ENCODE measurements at regions of chr16 and their contacts with region 1.

Region 1: GRCh38 chr16:56356276-56357240 is 68.8 kb downstream of the AMFR start:
- DNase-seq: peak; percentile 83
- H3K4me3 Mint-ChIP-seq: peak overlapping the region; percentile 46
- H3K27ac Mint-ChIP-seq: no peak overlapping the region
- H3K4me1 Mint-ChIP-seq: peaks cover 8% of the 10 kb centered on the region
- H3K27me3 Mint-ChIP-seq: peaks cover 10% of the 10 kb centered on the region
- CTCF ChIP-seq: peak; percentile 76

Region 2: DNA sequence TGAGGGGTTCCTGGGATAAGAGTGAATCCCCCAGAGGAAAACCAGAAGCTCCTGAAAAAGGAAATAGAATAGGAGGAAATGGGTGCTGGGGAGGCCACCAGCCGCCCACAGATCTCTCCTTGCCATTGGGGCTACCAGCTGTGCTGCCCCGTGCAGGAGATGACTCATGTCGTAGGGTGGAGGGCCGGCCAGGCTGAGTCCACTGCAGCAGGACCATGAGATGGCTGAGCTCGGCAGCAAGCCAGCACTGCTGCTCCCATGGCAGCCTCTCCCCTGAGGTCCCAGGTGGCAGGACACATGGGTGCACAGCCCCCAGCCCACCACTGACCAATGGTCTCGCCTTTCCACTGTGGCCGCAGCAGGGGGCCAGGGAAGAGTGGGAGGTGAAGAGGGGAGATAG is 69.7 kb before region 1 on chr16:
- CTCF ChIA-PET with region 1: no interaction called
- POLR2A ChIA-PET with region 1: no interaction called
- intact Hi-C with region 1: no loop called
- DNase-seq: peak; percentile 21
- H3K4me3 Mint-ChIP-seq: no peak overlapping the region
- H3K27ac Mint-ChIP-seq: no peak overlapping the region
- H3K4me1 Mint-ChIP-seq: no peaks in the 10 kb centered on the region
- H3K27me3 Mint-ChIP-seq: peaks cover 11% of the 10 kb centered on the region
- CTCF ChIP-seq: no peak

Region 3: DNA sequence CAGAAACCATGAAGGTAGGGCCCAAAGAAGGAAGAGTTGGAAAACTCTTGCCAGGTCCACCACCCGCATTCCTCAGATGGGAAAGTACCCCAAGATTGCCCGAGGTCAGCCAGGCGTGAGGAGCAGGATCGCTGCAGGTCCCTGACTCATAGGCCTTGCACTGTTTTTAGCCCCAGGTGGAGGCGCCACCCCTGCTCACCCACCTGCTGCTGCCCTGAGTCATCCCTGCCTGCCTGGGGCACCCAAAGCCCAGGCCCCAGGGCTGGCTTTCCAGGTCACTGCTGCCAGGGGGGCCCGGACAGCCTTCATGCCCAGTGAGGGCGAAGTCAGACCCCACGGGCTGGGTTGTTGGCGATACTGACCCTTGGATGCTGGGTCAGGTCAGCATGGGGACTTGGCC is 32.2 kb before region 1 on chr16:
- CTCF ChIA-PET with region 1: interaction called, 233 read pairs
- POLR2A ChIA-PET with region 1: interaction called, 3 read pairs
- intact Hi-C with region 1: no loop called
- DNase-seq: peak; percentile 77
- H3K4me3 Mint-ChIP-seq: no peak overlapping the region
- H3K27ac Mint-ChIP-seq: no peak overlapping the region
- H3K4me1 Mint-ChIP-seq: peaks cover 6% of the 10 kb centered on the region
- H3K27me3 Mint-ChIP-seq: no peaks in the 10 kb centered on the region
- CTCF ChIP-seq: no peak

Region 4: GRCh38 chr16:56332464-56333079 is 24.0 kb before region 1 on chr16:
- CTCF ChIA-PET with region 1: interaction called, 233 read pairs
- POLR2A ChIA-PET with region 1: interaction called, 15 read pairs
- intact Hi-C with region 1: loop called (anchors 1 kb)
- DNase-seq: peak; percentile 88
- H3K4me3 Mint-ChIP-seq: no peak overlapping the region
- H3K27ac Mint-ChIP-seq: no peak overlapping the region
- H3K4me1 Mint-ChIP-seq: peaks cover 15% of the 10 kb centered on the region
- H3K27me3 Mint-ChIP-seq: no peaks in the 10 kb centered on the region
- CTCF ChIP-seq: peak; percentile 70

Region 5: GRCh38 chr16:56370877-56371659 is 14.5 kb after region 1 on chr16:
- CTCF ChIA-PET with region 1: interaction called, 13 read pairs
- POLR2A ChIA-PET with region 1: interaction called, 3 read pairs
- intact Hi-C with region 1: no loop called
- DNase-seq: peak; percentile 25
- H3K4me3 Mint-ChIP-seq: no peak overlapping the region
- H3K27ac Mint-ChIP-seq: no peak overlapping the region
- H3K4me1 Mint-ChIP-seq: peaks cover 13% of the 10 kb centered on the region
- H3K27me3 Mint-ChIP-seq: no peaks in the 10 kb centered on the region
- CTCF ChIP-seq: no peak

Region 6: DNA sequence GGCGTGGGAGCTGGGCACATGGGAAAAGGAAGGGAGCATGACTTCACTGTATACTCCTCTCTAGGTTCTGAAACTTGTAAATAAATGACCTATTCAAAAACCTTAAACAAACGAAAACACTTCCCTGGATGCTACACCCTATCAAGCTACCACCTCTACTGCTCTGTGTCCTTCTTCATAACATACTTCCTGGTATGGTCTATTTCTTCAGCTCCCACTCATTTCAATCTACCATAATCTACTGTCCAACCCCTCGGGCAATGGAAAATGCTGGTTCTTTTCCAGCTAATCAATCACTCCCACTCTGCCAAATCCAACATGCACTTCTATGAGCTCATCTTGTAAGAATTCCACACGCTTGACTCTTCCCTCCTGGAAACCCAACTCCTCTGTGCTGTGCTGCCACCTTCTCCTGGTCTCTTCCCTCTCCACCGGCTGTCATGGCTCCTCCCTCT is 26.4 kb after region 1 on chr16:
- CTCF ChIA-PET with region 1: interaction called, 15 read pairs
- POLR2A ChIA-PET with region 1: interaction called, 4 read pairs
- intact Hi-C with region 1: no loop called
- DNase-seq: peak; percentile 86
- H3K4me3 Mint-ChIP-seq: peak overlapping the region; percentile 19
- H3K27ac Mint-ChIP-seq: peak overlapping the region; percentile 3
- H3K4me1 Mint-ChIP-seq: peaks cover 17% of the 10 kb centered on the region
- H3K27me3 Mint-ChIP-seq: no peaks in the 10 kb centered on the region
- CTCF ChIP-seq: no peak

Region 7: GRCh38 chr16:56438038-56438437 is 81.5 kb after region 1 on chr16:
- CTCF ChIA-PET with region 1: no interaction called
- POLR2A ChIA-PET with region 1: no interaction called
- intact Hi-C with region 1: no loop called
- DNase-seq: no peak
- H3K4me3 Mint-ChIP-seq: no peak overlapping the region
- H3K27ac Mint-ChIP-seq: no peak overlapping the region
- H3K4me1 Mint-ChIP-seq: no peaks in the 10 kb centered on the region
- H3K27me3 Mint-ChIP-seq: no peaks in the 10 kb centered on the region
- CTCF ChIP-seq: no peak

Region 8: DNA sequence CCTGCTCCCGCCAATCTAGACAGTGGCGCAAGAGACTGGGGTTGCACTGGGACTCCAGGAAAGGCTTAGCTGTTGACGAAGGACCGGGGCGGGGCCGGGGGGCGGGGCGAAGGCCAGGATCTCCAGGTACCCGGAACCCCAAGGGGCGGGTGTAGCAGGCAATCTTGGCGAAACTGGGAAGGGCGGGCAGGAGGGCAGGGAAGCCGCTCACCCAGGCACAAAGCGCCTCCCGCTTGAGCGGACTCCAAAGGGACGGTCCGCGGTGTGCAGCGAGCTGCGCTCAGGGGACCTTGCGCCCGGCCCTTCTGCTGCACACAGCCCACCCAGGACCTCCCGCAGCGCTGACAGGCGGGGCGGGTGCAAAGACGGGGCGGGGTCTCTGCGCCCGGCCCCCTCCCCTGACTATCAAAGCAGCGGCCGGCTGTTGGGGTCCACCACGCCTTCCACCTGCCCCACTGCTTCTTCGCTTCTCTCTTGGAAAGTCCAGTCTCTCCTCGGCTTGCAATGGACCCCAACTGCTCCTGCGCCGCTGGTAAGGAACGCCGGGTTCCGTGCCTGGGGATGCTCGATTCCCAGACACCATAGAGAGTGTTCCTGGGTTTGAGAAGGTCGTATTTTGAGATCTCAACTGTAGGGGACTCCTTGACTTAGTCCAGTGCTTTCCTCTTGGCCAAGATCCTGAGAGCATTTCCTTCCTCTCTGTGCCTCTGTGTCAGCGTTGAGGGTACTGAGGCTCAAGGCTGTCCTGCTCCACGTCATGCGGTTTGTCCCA is 301.2 kb after region 1 on chr16 and contains the start of gene MT1F:
- CTCF ChIA-PET with region 1: no interaction called
- POLR2A ChIA-PET with region 1: no interaction called
- intact Hi-C with region 1: no loop called
- DNase-seq: peak; percentile 95
- H3K4me3 Mint-ChIP-seq: peak within 1 kb of the TSS; percentile 77
- H3K27ac Mint-ChIP-seq: no peak within 1 kb of the TSS
- H3K4me1 Mint-ChIP-seq: peaks cover 21% of the 10 kb centered on the region
- H3K27me3 Mint-ChIP-seq: no peaks in the 10 kb centered on the region
- CTCF ChIP-seq: no peak
- total RNA-seq, gene MT1F: 1.7 and 2.4 TPM in 2 replicates